ENCODE measurements at regions of chr1 and their contacts with region 1.

Region 1: DNA sequence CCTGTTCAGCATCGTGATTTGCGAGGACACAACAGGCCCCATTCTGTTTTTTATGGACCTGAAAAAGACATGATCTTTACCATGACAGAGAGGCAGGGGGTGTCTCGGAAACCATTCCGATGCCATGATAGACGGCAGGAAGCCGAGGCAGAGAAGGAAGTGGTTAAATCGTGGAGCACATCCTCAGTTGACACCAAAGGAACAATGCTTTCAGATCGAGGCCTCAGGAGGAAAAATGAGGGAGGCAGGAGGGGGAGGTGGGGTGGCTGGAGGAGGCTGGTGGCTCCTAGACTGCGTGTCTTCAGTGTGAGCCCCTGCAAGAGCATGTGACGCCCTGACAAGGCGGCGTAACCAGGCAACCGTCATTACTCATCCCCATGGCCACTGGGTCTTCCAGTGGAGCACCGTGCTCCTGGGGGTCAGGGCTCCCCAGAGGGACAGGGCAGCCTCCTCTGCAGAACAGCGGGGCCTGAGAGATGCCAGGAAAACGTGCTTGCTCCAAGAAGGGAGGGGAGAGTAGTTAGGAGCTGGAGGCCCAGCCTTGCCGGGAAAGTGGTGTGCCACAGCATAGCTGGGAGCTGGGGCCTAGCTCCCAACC is 172.8 kb upstream of the TMEM51 start:
- DNase-seq: no peak
- H3K4me3 ChIP-seq: no peak overlapping the region
- H3K27ac ChIP-seq: no peak overlapping the region
- H3K4me1 ChIP-seq: peaks cover 0 to 4% (median 1%) of the 10 kb centered on the region in 4 experiments; a peak in 1 of 7 replicates
- H3K27me3 ChIP-seq: no peaks in the 10 kb centered on the region
- CTCF ChIP-seq: no peak
- EP300 ChIP-seq: no peak
- POLR2A ChIP-seq: no peak
- RAD21 ChIP-seq: no peak

Region 2: GRCh38 chr1:14937288-14937949 is 43.3 kb before region 1 on chr1:
- CTCF ChIA-PET with region 1: no interaction called
- POLR2A ChIA-PET with region 1: no interaction called
- DNase-seq: no peak
- H3K4me3 ChIP-seq: no peak overlapping the region
- H3K27ac ChIP-seq: no peak overlapping the region
- H3K4me1 ChIP-seq: peaks cover 0 to 8% (median 2%) of the 10 kb centered on the region in 4 experiments; a peak in 4 of 7 replicates
- H3K27me3 ChIP-seq: no peaks in the 10 kb centered on the region
- CTCF ChIP-seq: no peak
- EP300 ChIP-seq: no peak
- POLR2A ChIP-seq: no peak
- RAD21 ChIP-seq: no peak

Region 3: GRCh38 chr1:14968251-14968851 is 12.4 kb before region 1 on chr1:
- CTCF ChIA-PET with region 1: interaction called, 12 read pairs
- POLR2A ChIA-PET with region 1: interaction called, 4 read pairs
- DNase-seq: no peak
- H3K4me3 ChIP-seq: no peak overlapping the region
- H3K27ac ChIP-seq: no peak overlapping the region
- H3K4me1 ChIP-seq: peaks cover 0 to 5% (median 1%) of the 10 kb centered on the region in 4 experiments; a peak in 2 of 7 replicates
- H3K27me3 ChIP-seq: no peaks in the 10 kb centered on the region
- CTCF ChIP-seq: no peak
- EP300 ChIP-seq: no peak
- POLR2A ChIP-seq: no peak
- RAD21 ChIP-seq: no peak

Region 4: GRCh38 chr1:15116966-15117365 is 136.2 kb after region 1 on chr1:
- CTCF ChIA-PET with region 1: no interaction called
- POLR2A ChIA-PET with region 1: no interaction called
- DNase-seq: no peak
- H3K4me3 ChIP-seq: no peak overlapping the region
- H3K27ac ChIP-seq: no peak overlapping the region
- H3K4me1 ChIP-seq: peaks cover 5 to 10% (median 8%) of the 10 kb centered on the region in 4 experiments
- H3K27me3 ChIP-seq: no peaks in the 10 kb centered on the region; a peak in 1 of 7 replicates
- CTCF ChIP-seq: no peak
- EP300 ChIP-seq: no peak
- POLR2A ChIP-seq: no peak
- RAD21 ChIP-seq: no peak

Region 5: DNA sequence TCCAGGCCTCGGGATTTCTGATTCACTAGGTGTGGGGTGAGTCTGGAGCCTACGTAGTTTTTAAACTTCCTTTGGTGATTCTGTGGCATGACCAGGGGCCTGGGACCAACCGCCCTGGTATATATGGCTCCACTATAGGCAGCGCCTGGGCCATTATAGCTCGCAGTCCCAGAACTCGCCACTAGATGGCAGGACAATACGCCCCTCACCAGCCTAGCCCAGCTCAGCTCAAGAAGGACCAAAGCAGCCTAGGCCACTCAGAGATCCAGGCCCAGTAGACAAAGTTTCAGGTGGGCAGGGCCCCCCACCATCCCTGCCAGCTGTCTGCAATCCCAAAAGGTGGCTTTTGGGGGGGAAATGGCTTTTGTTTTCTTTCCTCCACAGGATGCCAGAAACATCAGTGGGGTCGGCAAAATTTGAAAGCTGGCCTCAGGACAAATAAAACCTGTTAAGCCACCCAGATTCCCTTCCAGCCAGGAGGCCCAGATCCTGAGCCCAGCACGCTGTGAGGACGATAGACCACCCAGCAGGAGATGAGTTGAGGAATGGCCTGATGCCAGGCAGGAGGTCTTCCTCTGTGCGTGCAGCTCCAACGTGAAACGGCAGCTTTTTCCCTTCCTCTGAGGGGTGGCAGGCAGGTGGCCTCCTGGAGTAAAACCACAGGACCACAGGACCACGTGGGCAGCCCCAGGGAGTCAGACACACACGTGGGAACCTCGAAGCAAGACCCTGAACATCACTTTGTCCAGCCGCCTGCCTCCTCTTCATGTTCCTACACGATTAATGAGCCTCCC is 148.0 kb after region 1 on chr1:
- CTCF ChIA-PET with region 1: no interaction called
- POLR2A ChIA-PET with region 1: no interaction called
- DNase-seq: peak; percentile 56 to 94
- H3K4me3 ChIP-seq: no peak overlapping the region
- H3K27ac ChIP-seq: no peak overlapping the region
- H3K4me1 ChIP-seq: no peaks in the 10 kb centered on the region
- H3K27me3 ChIP-seq: no peaks in the 10 kb centered on the region
- CTCF ChIP-seq: peak; percentile 92 to 96 (median 94)
- EP300 ChIP-seq: no peak
- POLR2A ChIP-seq: no peak
- RAD21 ChIP-seq: peak; percentile 91 to 92